Caco-2 (cell line): ENCODE measurements at regions of chr17 and their contacts with region 1.

Region 1: DNA sequence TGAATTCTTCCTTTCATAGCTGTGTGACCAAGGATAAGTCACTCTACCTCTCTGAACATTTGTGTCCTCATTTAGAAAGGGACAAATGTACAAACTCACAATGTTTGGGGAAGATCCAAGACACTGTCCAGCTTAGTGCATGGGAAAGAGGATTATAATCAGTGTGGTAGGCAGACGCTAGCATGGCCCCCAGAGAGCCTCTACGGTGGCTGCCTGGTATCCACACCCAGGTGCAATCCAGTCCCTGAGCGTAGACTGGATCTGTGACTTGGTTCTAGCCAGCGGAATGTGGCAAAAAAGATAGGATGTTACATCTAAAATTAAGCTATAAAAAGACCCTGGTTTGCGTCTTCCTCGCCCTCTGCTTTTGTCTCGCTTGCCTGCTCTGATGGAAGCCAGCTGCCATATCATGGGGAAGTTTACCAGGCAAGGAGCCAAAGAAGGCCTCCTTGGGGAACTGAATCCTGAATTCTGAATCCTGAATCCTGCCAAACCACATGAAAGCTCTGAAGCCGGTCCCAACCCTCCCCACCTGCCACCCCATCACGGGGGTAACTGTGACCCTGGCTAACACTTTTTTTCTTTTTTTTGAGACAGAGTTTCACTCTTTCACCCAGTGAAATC is 51.7 kb downstream of the PLXDC1 start:
- DNase-seq: no peak
- H3K4me3 ChIP-seq: no peak overlapping the region
- H3K4me3 Mint-ChIP-seq: no peak overlapping the region
- H3K27ac Mint-ChIP-seq: no peak overlapping the region
- H3K4me1 ChIP-seq: peaks cover 16% of the 10 kb centered on the region
- H3K4me1 Mint-ChIP-seq: peaks cover 6% of the 10 kb centered on the region
- H3K27me3 ChIP-seq: no peaks in the 10 kb centered on the region
- H3K27me3 Mint-ChIP-seq: no peaks in the 10 kb centered on the region
- CTCF ChIP-seq: no peak

Region 2: DNA sequence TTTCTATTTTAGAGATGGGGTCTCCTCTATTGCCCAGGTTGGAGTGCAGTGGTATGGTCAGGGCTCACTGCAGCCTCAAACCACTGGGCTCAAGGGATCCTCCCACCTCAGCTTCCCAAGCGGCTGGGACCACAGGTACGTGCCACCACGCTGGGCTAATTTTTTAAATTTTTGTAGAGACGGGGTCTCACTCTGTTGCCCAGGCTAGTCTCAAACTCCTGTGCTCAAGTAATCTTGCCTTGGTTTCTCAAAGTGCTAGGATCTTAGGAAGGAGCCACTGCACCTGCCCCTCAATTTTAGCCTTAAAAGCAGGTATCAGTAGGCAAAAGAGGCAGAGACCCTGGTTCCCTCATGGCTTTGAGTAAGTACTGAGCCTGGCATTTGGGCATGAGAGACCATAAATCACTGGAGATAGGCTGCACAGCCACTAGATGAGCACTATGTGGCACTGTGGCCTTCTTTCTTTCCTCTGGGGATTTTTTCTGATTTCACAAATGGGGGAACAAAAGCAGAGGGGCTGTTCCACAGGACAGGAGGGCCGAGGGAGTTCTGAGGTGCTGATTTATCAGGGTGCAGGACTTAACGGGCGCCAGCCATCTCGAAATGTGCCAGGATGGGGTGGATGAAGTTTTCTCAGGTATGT is 30.5 kb before region 1 on chr17:
- CTCF ChIA-PET with region 1: no interaction called
- POLR2A ChIA-PET with region 1: no interaction called
- intact Hi-C with region 1: loop called (anchors 5 kb)
- DNase-seq: peak in 1 of 2 experiments; percentile 34
- H3K4me3 ChIP-seq: no peak overlapping the region
- H3K4me3 Mint-ChIP-seq: no peak overlapping the region
- H3K27ac Mint-ChIP-seq: no peak overlapping the region
- H3K4me1 ChIP-seq: no peaks in the 10 kb centered on the region
- H3K4me1 Mint-ChIP-seq: peaks cover 6% of the 10 kb centered on the region
- H3K27me3 ChIP-seq: no peaks in the 10 kb centered on the region; the same call in 1 of the 2 replicates
- H3K27me3 Mint-ChIP-seq: peaks cover 2% of the 10 kb centered on the region
- CTCF ChIP-seq: peak; percentile 56 to 73